Heart left ventricle (tissue), 16 donors: ENCODE measurements at regions of chr7 and their contacts with region 1.

Region 1: GRCh38 chr7:7351832-7352231 is 169.5 kb downstream of the C1GALT1 start:
- DNase-seq: no peak
- ATAC-seq: no peak
- H3K4me3 ChIP-seq: no peak overlapping the region
- H3K27ac ChIP-seq: no peak overlapping the region
- H3K4me1 ChIP-seq: no peaks in the 10 kb centered on the region
- H3K27me3 ChIP-seq: no peaks in the 10 kb centered on the region
- CTCF ChIP-seq: no peak
- POLR2A ChIP-seq: no peak

Region 2: GRCh38 chr7:7237201-7237977 is 114.4 kb before region 1 on chr7:
- intact Hi-C with region 1: no loop called
- DNase-seq: no peak
- ATAC-seq: no peak
- H3K4me3 ChIP-seq: no peak overlapping the region
- H3K27ac ChIP-seq: no peak overlapping the region
- H3K4me1 ChIP-seq: peaks cover 0 to 11% (median 0%) of the 10 kb centered on the region in 12 donors
- H3K27me3 ChIP-seq: no peaks in the 10 kb centered on the region
- CTCF ChIP-seq: no peak
- POLR2A ChIP-seq: no peak

Region 3: DNA sequence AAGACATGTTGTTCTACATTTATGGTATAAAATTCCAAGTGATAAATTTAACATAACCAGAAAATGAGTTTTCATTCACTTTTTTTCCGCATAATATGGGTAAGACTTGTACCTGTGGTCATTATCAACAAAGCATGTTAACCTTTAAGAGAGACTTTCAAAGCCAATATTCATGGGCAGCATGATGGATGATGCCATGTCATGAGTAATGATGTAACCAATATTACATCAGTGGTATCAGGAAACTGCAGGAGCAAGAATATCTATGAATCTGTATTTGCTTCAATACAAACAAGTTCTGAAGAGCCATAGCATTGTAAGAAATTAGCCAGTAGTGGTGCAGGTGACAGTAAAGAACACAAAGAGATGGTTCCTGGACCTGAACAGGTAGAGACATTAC is 42.6 kb before region 1 on chr7:
- intact Hi-C with region 1: loop called in 1 of 10 experiments (anchors 2 kb)
- DNase-seq: no peak
- ATAC-seq: no peak
- H3K4me3 ChIP-seq: no peak overlapping the region
- H3K27ac ChIP-seq: no peak overlapping the region
- H3K4me1 ChIP-seq: no peaks in the 10 kb centered on the region
- H3K27me3 ChIP-seq: no peaks in the 10 kb centered on the region
- CTCF ChIP-seq: no peak
- POLR2A ChIP-seq: no peak